ENCODE measurements at regions of chr3 and their contacts with region 1.

Region 1: GRCh38 chr3:168058482-168058881 is 37.2 kb downstream of the GOLIM4 start:
- H3K4me3 ChIP-seq: no peak overlapping the region
- H3K27ac ChIP-seq: no peak overlapping the region
- H3K4me1 ChIP-seq: no peaks in the 10 kb centered on the region
- CTCF ChIP-seq: no peak

Region 2: DNA sequence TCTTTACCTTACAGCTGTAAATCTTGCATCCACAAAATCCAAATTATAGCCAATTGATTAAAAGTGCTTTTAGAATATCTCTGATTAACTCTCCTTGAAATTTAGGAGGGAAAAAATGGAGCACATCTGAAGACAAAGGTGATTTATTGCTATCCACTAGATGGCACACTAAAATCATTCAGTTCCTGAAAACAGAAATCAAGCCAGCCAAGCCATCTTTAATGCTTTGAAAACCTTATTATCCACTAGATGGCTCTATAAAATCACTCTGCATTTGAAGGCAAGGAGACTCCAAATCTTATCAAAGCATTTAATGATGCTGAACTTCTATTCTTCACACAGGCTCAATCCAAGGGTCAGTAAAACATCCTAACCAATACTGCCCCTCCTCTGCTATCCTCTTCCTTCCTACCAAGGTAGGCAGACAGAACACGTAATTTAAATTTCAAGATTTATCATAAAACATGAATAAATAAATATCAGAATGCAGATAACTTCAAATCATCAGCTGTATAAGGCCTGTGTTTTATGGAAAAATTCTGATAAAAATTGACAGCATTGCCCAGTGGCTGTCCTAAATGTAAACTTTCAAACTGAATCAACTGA is 11.2 kb before region 1 on chr3:
- CTCF ChIA-PET with region 1: interaction called, 10 read pairs
- POLR2A ChIA-PET with region 1: no interaction called
- H3K4me3 ChIP-seq: no peak overlapping the region
- H3K27ac ChIP-seq: no peak overlapping the region
- H3K4me1 ChIP-seq: 0 out of 2 replicates have a peak, but pooled peaks cover 5% of the 10 kb centered on the region
- CTCF ChIP-seq: peak; percentile 69; the same call in 1 of the 2 replicates

Region 3: DNA sequence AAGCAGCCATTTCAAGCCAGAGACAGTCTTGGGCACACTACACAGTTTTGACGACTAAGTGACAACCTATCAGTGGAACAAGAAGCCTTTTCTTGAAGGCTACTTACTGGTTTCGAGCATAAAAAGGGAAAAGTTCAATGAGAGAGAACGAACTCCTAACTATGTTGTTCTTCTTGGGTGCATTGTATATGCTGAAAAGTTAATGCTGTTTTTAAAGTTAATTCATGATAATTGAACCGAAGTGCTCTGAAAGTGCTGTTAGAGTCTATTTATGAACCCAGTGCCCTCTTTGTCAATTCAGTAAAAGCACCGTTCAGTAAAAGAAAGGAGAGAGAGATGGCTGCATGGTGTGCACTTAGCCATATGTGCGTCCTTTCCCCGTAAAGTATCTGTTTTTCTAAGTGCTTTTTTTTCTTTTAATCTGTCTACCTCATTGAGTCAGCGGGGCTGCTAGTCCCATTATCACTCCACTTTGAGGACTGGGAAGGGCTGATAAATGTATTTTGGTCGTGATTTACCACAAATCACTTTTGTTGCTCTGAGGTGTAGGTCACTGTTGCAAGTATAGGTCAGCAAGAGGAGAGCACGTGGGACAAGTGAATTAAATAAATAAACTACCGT is 418.0 kb after region 1 on chr3:
- CTCF ChIA-PET with region 1: no interaction called
- POLR2A ChIA-PET with region 1: no interaction called
- H3K4me3 ChIP-seq: no peak overlapping the region
- H3K27ac ChIP-seq: no peak overlapping the region
- H3K4me1 ChIP-seq: peaks cover 5% of the 10 kb centered on the region; the same call in 1 of the 2 replicates
- CTCF ChIP-seq: no peak

Measured in HEK293 (cell line).